PC-3 (cell line): ENCODE measurements at regions of chr1 and their contacts with region 1.

Region 1: GRCh38 chr1:117739504-117739903 is 133.7 kb downstream of the TENT5C start:
- DNase-seq: no peak
- ATAC-seq: no peak
- H3K4me3 ChIP-seq: no peak overlapping the region
- H3K27ac ChIP-seq: no peak overlapping the region
- H3K4me1 ChIP-seq: peaks cover 20% of the 10 kb centered on the region
- H3K27me3 ChIP-seq: no peaks in the 10 kb centered on the region
- CTCF ChIP-seq: no peak

Region 2: GRCh38 chr1:117627546-117628130 is 111.9 kb before region 1 on chr1:
- CTCF ChIA-PET with region 1: no interaction called
- POLR2A ChIA-PET with region 1: interaction called, 10 read pairs
- intact Hi-C with region 1: no loop called
- DNase-seq: peak; percentile 45
- ATAC-seq: no peak
- H3K4me3 ChIP-seq: no peak overlapping the region
- H3K27ac ChIP-seq: no peak overlapping the region
- H3K4me1 ChIP-seq: peaks cover 51% of the 10 kb centered on the region
- H3K27me3 ChIP-seq: no peaks in the 10 kb centered on the region
- CTCF ChIP-seq: no peak

Region 3: DNA sequence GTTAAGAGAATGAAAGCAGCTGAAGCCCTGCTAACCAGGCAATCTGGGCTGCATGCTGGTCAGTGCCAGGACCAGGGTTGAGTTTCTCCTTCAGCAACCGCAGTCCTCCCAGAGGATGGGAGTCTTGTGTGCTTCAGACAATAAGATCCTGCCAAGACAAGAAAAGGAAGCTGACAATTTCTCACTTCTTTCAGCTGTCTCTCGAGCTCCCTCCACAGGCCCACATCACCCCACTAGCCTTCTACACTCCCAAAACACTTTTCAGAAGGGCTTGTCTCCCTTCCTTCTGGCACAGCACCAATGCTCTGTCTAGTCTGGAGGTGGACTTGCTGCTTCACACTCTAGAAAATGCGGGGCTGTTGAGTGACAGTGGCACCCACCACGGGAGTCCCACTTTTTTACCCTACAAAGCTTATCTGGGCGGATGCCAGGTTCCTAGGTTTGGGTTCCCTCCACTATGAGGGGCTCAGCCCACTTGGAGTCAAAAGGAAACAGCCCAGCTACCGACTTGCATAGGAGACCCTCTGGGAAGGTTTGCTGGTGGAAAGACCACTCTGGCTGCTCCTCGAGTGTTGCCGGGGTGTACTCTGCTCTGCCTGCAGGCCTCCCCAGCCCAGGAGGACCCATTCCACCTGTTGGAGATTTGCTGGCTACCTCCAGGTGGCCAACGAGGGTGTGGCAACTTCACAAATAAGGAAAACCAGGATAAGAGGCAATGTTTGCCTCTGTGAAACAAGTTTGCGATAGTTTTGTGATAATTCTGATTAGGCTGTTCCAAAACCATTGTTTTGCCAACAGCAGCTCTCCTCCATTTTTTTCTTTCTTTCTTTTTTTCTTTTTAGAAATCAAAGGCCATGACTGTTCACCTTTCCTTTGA is 64.7 kb before region 1 on chr1:
- CTCF ChIA-PET with region 1: no interaction called
- POLR2A ChIA-PET with region 1: no interaction called
- intact Hi-C with region 1: no loop called
- DNase-seq: peak; percentile 43
- ATAC-seq: peak; percentile 58
- H3K4me3 ChIP-seq: no peak overlapping the region
- H3K27ac ChIP-seq: no peak overlapping the region
- H3K4me1 ChIP-seq: peaks cover 15% of the 10 kb centered on the region
- H3K27me3 ChIP-seq: no peaks in the 10 kb centered on the region
- CTCF ChIP-seq: peak; percentile 53